ENCODE measurements at regions of chr9 and their contacts with region 1.

Region 1: DNA sequence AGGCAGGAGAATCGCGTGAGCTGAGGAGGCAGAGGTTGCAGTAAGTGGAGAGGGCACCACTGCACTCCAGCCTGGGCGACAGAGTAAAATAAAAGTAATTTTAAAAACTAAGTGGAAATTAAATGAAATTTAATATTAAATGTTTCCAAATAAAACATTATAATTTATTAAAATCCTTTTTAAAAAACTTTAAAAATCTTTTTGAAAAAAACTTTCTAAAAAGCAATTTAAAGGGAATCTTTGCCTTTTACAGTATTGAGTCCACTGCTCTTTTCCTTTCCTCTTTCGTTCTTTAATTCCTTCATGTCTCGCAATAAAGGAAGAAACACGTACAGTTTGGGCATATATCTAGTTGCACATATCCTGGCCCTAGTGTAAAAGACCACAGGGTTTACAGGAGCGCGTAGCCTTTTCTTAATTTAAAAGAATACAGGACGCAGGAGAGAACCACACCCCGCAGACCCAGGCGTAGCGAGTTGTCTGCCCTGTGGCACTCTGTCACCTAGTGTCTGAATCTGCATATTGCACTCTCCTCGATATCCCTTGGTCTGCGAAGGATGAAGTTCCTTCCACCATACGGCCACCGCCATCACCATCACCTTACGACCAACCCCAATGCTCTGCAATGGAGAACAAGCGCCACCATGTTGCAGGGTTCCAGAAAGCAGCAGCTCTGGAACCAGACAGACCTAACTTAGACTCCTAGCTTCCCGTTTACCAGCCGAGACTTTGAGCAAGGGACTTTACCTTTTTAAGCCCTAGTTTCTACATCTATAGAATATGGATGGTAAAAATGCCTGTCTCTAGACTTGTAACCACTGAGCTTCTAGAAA is 77.6 kb upstream of the DMRT1 start:
- DNase-seq: peak; percentile 86
- H3K4me3 ChIP-seq: peak overlapping the region in 3 of 4 donors; percentile 11 to 26 (median 25)
- H3K27ac ChIP-seq: peak overlapping the region in 1 of 4 donors; percentile 41
- H3K4me1 ChIP-seq: no peaks in the 10 kb centered on the region
- H3K27me3 ChIP-seq: no peaks in the 10 kb centered on the region
- CTCF ChIP-seq: peak; percentile 92 to 98 (median 94)
- EP300 ChIP-seq: no peak
- POLR2A ChIP-seq: no peak

Region 2: GRCh38 chr9:469672-470551 is 294.0 kb before region 1 on chr9:
- intact Hi-C with region 1: loop called (anchors 10 kb)
- DNase-seq: peak; percentile 92
- H3K4me3 ChIP-seq: peak overlapping the region; percentile 46 to 67 (median 64)
- H3K27ac ChIP-seq: peak overlapping the region; percentile 75 to 86 (median 78)
- H3K4me1 ChIP-seq: peaks cover 0 to 23% (median 14%) of the 10 kb centered on the region in 4 donors
- H3K27me3 ChIP-seq: no peaks in the 10 kb centered on the region
- CTCF ChIP-seq: no peak
- EP300 ChIP-seq: no peak
- POLR2A ChIP-seq: peak in 1 of 2 donors; percentile 27

Region 3: GRCh38 chr9:613771-614347 is 150.0 kb before region 1 on chr9:
- intact Hi-C with region 1: loop called (anchors 1 kb)
- DNase-seq: peak; percentile 92
- H3K4me3 ChIP-seq: no peak overlapping the region
- H3K27ac ChIP-seq: peak overlapping the region; percentile 61 to 79 (median 72)
- H3K4me1 ChIP-seq: peaks cover 0 to 46% (median 34%) of the 10 kb centered on the region in 4 donors
- H3K27me3 ChIP-seq: no peaks in the 10 kb centered on the region
- CTCF ChIP-seq: peak; percentile 86 to 96 (median 90)
- EP300 ChIP-seq: no peak
- POLR2A ChIP-seq: no peak

Region 4: DNA sequence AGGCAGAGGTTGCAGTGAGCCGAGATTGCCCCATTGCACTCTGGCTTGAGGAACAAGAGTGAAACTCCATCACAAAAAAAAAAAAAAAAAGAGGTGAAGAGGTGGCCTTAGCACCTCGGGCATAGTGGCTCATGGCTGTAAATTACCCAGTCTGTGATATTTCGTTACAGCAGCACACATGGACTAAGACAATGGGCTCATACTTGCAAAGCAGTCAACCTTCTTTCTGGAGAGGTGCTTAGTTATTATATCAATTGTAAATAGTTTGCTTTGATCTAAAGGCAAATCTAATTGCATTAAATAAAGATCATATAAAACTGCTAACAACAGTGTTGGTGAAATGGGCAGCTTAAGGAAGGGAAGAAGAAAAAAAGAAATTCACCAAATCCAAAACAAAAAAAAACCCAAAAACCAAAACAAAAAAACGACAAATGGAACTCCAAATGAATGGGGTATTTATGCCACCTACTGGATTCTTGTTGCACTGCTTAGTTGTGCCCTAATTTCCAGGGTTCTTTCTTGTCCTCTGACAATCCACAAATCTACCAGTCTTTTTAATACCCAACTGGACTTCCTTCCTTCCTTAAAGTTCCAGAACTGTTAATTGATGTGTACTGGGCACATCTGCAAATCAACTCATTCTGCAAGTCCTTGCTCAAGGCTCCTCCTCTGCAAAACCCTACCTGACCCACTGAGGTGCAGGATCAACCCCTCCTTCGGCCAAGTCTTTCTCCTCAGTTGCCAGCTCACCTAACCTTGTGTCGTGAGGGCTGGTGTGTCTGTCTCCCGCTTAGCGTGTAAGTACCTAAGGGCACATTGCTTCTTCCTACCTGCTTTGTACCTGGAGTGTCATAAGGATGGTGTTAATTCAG is 42.6 kb after region 1 on chr9:
- intact Hi-C with region 1: loop called (anchors 5 kb)
- DNase-seq: no peak
- H3K4me3 ChIP-seq: no peak overlapping the region
- H3K27ac ChIP-seq: no peak overlapping the region
- H3K4me1 ChIP-seq: peaks cover 0 to 13% (median 11%) of the 10 kb centered on the region in 4 donors
- H3K27me3 ChIP-seq: no peaks in the 10 kb centered on the region
- CTCF ChIP-seq: peak; percentile 18 to 61 (median 42)
- EP300 ChIP-seq: no peak
- POLR2A ChIP-seq: no peak